HEK293 (cell line): ENCODE measurements at regions of chr6 and their contacts with region 1.

Region 1: GRCh38 chr6:168865-169455 is 123.3 kb upstream of the DUSP22 start:
- H3K4me3 ChIP-seq: no peak overlapping the region
- H3K27ac ChIP-seq: no peak overlapping the region
- H3K4me1 ChIP-seq: no peaks in the 10 kb centered on the region
- CTCF ChIP-seq: no peak; the same call in 1 of the 2 replicates

Region 2: GRCh38 chr6:152431-152830 is 16.5 kb before region 1 on chr6:
- CTCF ChIA-PET with region 1: interaction called, 50 read pairs
- POLR2A ChIA-PET with region 1: no interaction called
- H3K4me3 ChIP-seq: no peak overlapping the region
- H3K27ac ChIP-seq: no peak overlapping the region
- H3K4me1 ChIP-seq: peaks cover 2% of the 10 kb centered on the region; the same call in 1 of the 2 replicates
- CTCF ChIP-seq: no peak

Region 3: GRCh38 chr6:181049-181654 is 12.2 kb after region 1 on chr6:
- CTCF ChIA-PET with region 1: interaction called, 12 read pairs
- POLR2A ChIA-PET with region 1: no interaction called
- H3K4me3 ChIP-seq: no peak overlapping the region
- H3K27ac ChIP-seq: no peak overlapping the region
- H3K4me1 ChIP-seq: no peaks in the 10 kb centered on the region
- CTCF ChIP-seq: no peak

Region 4: DNA sequence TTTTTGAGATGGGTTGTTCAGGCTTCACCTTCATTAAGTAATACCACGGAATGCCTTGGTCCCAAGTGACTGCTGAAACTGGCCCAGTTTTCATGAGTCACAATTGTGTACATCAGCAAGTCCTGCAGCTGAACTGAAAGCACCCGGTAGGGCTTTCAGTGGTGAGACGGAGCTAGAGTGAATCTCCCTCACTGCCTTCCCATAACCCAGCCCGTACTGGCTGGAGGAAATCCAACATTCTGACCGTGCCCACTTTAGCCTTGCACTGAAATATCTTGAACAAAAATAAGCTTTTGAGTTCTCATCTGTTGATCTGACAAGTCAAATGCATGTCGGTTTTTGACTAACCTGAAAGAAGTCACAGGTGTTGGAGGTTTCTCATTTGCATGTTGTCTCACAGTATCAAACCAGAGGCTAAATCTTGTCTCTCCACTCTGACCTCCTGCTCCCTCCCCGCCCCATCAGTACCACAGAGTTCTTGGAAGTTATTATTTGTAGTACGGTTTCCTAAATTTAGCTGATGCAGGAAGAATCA is 159.2 kb after region 1 on chr6:
- CTCF ChIA-PET with region 1: no interaction called
- POLR2A ChIA-PET with region 1: no interaction called
- H3K4me3 ChIP-seq: no peak overlapping the region
- H3K27ac ChIP-seq: no peak overlapping the region
- H3K4me1 ChIP-seq: peaks cover 33% of the 10 kb centered on the region
- CTCF ChIP-seq: no peak

Region 5: GRCh38 chr6:524803-525202 is 355.8 kb after region 1 on chr6:
- CTCF ChIA-PET with region 1: no interaction called
- POLR2A ChIA-PET with region 1: no interaction called
- H3K4me3 ChIP-seq: no peak overlapping the region
- H3K27ac ChIP-seq: no peak overlapping the region
- H3K4me1 ChIP-seq: no peaks in the 10 kb centered on the region
- CTCF ChIP-seq: no peak